CD4-positive, alpha-beta memory T cell (primary cell): ENCODE measurements at regions of chr3 and their contacts with region 1.

Region 1: DNA sequence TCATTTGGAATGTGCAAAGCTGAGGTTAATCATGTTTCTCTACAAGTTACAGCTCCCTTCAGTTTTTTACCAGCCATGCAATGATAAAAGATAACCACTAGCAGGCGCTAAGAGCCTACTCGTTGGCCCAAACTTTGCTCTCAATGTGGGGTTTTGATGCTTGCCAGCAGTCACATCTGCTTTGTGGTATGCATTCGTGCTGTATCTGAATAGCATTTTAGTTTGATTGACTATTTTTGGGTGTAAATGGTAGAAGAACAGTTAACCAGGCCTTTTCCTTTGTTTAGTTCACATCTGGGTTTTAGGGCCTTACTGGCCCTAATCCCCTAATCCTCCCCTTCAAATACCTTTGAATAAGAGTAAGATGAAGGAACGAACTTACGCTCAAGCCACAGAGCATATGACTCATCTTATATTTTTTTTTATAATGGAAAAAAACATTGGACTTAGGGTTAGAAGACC is 4.4 kb upstream of the CLDN11 start:
- DNase-seq: peak; percentile 39 to 46 (median 43)
- H3K4me3 ChIP-seq: no peak overlapping the region
- H3K4me3 Mint-ChIP-seq: no peak overlapping the region
- H3K27ac ChIP-seq: no peak overlapping the region
- H3K27ac Mint-ChIP-seq: no peak overlapping the region
- H3K4me1 ChIP-seq: peaks cover 11% of the 10 kb centered on the region
- H3K4me1 Mint-ChIP-seq: peaks cover 4 to 5% (median 5%) of the 10 kb centered on the region in 4 donors
- H3K27me3 ChIP-seq: peaks cover 4% of the 10 kb centered on the region
- H3K27me3 Mint-ChIP-seq: peaks cover 18 to 22% of the 10 kb centered on the region in 2 donors

Region 2: DNA sequence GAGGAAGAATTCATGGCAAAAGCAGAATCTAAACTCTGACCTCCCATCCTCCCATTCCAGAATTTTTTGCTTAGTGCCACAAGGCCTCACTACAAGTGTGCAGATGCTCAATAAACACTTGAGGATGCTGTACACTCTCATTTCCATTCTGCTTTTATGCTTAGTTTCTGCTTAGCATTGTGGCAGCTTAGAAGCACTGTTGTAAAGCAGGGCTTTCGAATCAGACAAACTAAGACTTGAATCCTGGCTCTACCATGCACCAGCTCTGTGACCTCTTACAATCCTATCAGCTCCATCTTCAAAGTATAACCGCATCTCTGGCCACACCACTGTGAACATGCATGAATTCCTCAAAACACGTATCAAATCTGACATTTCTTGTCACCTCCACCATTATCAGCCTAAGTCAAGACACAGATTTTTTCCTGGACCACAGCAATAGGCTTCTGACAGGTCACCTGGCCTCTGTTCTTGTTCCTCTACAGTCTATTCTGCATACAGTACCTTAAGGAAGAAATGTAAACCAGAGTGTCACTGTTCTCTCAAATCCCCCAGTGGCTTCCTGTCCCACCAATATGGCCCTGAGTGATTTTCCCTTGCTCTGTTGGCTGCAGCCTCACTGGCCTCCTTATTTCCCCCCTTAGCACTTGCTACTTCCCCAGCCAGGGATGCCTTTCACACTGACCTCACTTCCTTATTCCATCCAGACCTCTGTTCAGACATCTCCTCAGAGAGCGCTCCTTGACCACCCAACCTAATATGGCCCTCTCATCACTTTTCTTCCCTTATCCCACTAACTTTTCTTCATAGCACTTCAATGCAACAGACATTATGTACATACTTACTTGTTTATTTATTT is 224.6 kb before region 1 on chr3:
- CTCF ChIA-PET with region 1: interaction called, 5 read pairs
- POLR2A ChIA-PET with region 1: no interaction called
- intact Hi-C with region 1: loop called (anchors 1 kb)
- DNase-seq: no peak
- H3K4me3 ChIP-seq: no peak overlapping the region
- H3K4me3 Mint-ChIP-seq: peak overlapping the region in 3 of 8 donors; percentile 21 to 49 (median 22)
- H3K27ac ChIP-seq: no peak overlapping the region
- H3K27ac Mint-ChIP-seq: no peak overlapping the region
- H3K4me1 ChIP-seq: no peaks in the 10 kb centered on the region
- H3K4me1 Mint-ChIP-seq: peaks cover 8 to 11% (median 9%) of the 10 kb centered on the region in 4 donors
- H3K27me3 ChIP-seq: no peaks in the 10 kb centered on the region
- H3K27me3 Mint-ChIP-seq: peaks cover 0 to 1% of the 10 kb centered on the region in 2 donors

Region 3: GRCh38 chr3:170357176-170357919 is 56.9 kb before region 1 on chr3 and contains the start of gene SKIL:
- CTCF ChIA-PET with region 1: interaction called, 4 read pairs
- POLR2A ChIA-PET with region 1: interaction called, 4 read pairs
- intact Hi-C with region 1: loop called (anchors 5 kb)
- DNase-seq: peak; percentile 96 to 98 (median 97)
- H3K4me3 ChIP-seq: peak within 1 kb of the TSS; percentile 57 to 62
- H3K4me3 Mint-ChIP-seq: peak within 1 kb of the TSS; percentile 90 to 99 (median 93)
- H3K27ac ChIP-seq: peak within 1 kb of the TSS; percentile 88
- H3K27ac Mint-ChIP-seq: peak within 1 kb of the TSS; percentile 95 to 99 (median 98)
- H3K4me1 ChIP-seq: peaks cover 32% of the 10 kb centered on the region
- H3K4me1 Mint-ChIP-seq: peaks cover 31 to 72% (median 43%) of the 10 kb centered on the region in 4 donors
- H3K27me3 ChIP-seq: no peaks in the 10 kb centered on the region
- H3K27me3 Mint-ChIP-seq: no peaks in the 10 kb centered on the region
- total RNA-seq, gene SKIL: 59.3 to 60.4 TPM

Region 4: GRCh38 chr3:170397579-170398177 is 16.6 kb before region 1 on chr3:
- CTCF ChIA-PET with region 1: interaction called, 13 read pairs
- POLR2A ChIA-PET with region 1: no interaction called
- intact Hi-C with region 1: no loop called
- DNase-seq: no peak
- H3K4me3 ChIP-seq: no peak overlapping the region
- H3K4me3 Mint-ChIP-seq: no peak overlapping the region
- H3K27ac ChIP-seq: no peak overlapping the region
- H3K27ac Mint-ChIP-seq: no peak overlapping the region
- H3K4me1 ChIP-seq: no peaks in the 10 kb centered on the region
- H3K4me1 Mint-ChIP-seq: no peaks in the 10 kb centered on the region
- H3K27me3 ChIP-seq: no peaks in the 10 kb centered on the region
- H3K27me3 Mint-ChIP-seq: no peaks in the 10 kb centered on the region

Region 5: DNA sequence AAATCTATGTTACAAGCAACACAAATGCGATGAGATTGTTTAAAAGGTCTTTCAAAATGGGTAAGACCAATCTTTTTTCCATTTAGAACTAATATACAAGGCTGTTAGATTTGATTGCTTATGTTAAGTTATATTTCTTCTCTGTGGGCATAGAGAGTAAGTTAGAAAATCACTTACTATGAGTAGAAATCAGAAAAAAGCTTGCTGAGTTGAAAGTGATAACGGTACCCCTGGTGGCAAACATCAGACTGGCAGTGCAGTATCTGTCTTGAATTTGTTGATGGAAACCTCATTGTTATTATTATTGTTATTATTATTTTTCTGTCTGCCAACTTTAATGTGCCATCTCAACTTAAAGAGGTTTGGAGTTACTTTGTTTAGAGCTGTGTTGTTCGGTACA is 16.8 kb after region 1 on chr3:
- CTCF ChIA-PET with region 1: interaction called, 24 read pairs
- POLR2A ChIA-PET with region 1: interaction called, 4 read pairs
- intact Hi-C with region 1: no loop called
- DNase-seq: no peak
- H3K4me3 ChIP-seq: no peak overlapping the region
- H3K4me3 Mint-ChIP-seq: no peak overlapping the region
- H3K27ac ChIP-seq: no peak overlapping the region
- H3K27ac Mint-ChIP-seq: no peak overlapping the region
- H3K4me1 ChIP-seq: peaks cover 12% of the 10 kb centered on the region
- H3K4me1 Mint-ChIP-seq: peaks cover 9 to 21% (median 14%) of the 10 kb centered on the region in 4 donors
- H3K27me3 ChIP-seq: no peaks in the 10 kb centered on the region
- H3K27me3 Mint-ChIP-seq: peaks cover 0 to 2% of the 10 kb centered on the region in 2 donors

Region 6: GRCh38 chr3:170614214-170614966 is 200.2 kb after region 1 on chr3:
- CTCF ChIA-PET with region 1: no interaction called
- POLR2A ChIA-PET with region 1: no interaction called
- intact Hi-C with region 1: no loop called
- DNase-seq: no peak
- H3K4me3 ChIP-seq: no peak overlapping the region
- H3K4me3 Mint-ChIP-seq: no peak overlapping the region
- H3K27ac ChIP-seq: no peak overlapping the region
- H3K27ac Mint-ChIP-seq: no peak overlapping the region
- H3K4me1 ChIP-seq: no peaks in the 10 kb centered on the region
- H3K4me1 Mint-ChIP-seq: no peaks in the 10 kb centered on the region
- H3K27me3 ChIP-seq: no peaks in the 10 kb centered on the region
- H3K27me3 Mint-ChIP-seq: peaks cover 5 to 7% of the 10 kb centered on the region in 2 donors

Region 7: GRCh38 chr3:170811928-170812591 is 397.8 kb after region 1 on chr3:
- CTCF ChIA-PET with region 1: interaction called, 97 read pairs
- POLR2A ChIA-PET with region 1: no interaction called
- intact Hi-C with region 1: loop called (anchors 1 kb)
- DNase-seq: peak; percentile 64 to 73 (median 67)
- H3K4me3 ChIP-seq: no peak overlapping the region
- H3K4me3 Mint-ChIP-seq: no peak overlapping the region
- H3K27ac ChIP-seq: no peak overlapping the region
- H3K27ac Mint-ChIP-seq: no peak overlapping the region
- H3K4me1 ChIP-seq: no peaks in the 10 kb centered on the region
- H3K4me1 Mint-ChIP-seq: peaks cover 0 to 5% (median under 1%) of the 10 kb centered on the region in 4 donors
- H3K27me3 ChIP-seq: no peaks in the 10 kb centered on the region
- H3K27me3 Mint-ChIP-seq: peaks cover 0 to 2% of the 10 kb centered on the region in 2 donors